GM10248 (cell line): ENCODE measurements at regions of chr13 and their contacts with region 1.

Region 1: GRCh38 chr13:27631156-27631555 is 9.5 kb downstream of the POLR1D start:
- DNase-seq: no peak
- CTCF ChIP-seq: no peak

Region 2: GRCh38 chr13:27374650-27375049 is 256.5 kb before region 1 on chr13:
- CTCF ChIA-PET with region 1: no interaction called
- POLR2A ChIA-PET with region 1: no interaction called
- DNase-seq: peak; percentile 75
- CTCF ChIP-seq: peak; percentile 71

Region 3: DNA sequence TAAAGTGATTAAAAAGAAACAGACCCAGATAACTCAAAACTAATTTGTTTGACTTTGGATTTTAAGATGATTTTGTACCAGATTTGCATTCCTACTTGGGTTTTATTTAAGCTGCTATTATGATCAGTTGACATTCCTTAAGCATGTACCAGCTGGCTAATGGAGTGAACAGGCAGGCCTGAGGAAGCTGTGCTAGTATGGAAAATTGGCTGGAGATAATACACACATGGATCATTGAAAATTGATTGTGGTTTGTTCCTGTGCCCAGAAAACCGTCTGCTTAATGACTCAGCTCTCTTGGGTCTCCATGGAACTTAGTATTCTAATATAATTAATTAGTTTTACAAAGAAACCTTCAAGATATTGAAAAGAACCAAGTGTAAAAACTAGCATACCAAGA is 13.1 kb after region 1 on chr13:
- CTCF ChIA-PET with region 1: interaction called, 22 read pairs
- POLR2A ChIA-PET with region 1: no interaction called
- DNase-seq: no peak
- CTCF ChIP-seq: no peak